A549 (cell line): ENCODE measurements at regions of chr14 and their contacts with region 1.

Region 1: DNA sequence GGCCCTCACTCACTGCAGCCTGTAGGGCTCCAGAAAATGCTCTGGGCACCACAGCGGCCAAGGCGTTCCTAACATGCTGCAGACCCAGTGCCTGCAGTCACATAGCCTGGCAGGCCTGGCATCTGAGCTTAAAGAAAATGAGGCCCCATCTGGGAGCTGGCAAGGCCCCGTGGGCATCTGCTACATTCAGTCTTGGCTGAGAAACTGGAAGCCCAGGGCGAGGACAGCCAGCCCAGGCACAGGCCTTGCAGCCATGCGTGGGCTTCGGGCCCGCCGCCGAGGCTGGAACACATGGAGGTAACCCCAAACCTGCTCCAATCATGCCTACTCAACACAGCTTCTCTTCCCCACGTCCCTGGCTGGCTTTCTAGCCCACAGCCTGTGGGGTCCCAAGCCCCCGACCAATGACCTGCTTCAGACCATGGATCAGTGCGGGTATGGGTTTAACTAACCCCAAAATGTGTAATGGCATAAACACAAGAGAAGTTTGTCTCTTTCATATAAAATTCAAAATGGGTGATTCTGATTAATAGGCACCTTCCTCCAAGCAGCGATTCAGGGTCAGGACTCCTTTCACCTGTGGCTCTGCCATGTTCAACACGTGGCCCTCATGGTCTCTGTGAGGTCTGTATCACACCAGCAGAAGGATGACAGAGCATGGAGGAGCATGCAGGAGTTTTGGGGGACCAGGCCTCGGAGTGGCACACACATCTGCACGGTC is 6.4 kb downstream of the NGB start:
- DNase-seq: no peak
- ATAC-seq: no peak
- H3K4me3 ChIP-seq: no peak overlapping the region
- H3K27ac ChIP-seq: no peak overlapping the region
- H3K4me1 ChIP-seq: no peaks in the 10 kb centered on the region
- CTCF ChIP-seq: no peak
- EP300 ChIP-seq: no peak
- POLR2A ChIP-seq: no peak
- RAD21 ChIP-seq: no peak

Region 2: GRCh38 chr14:77275601-77276017 is 11.0 kb after region 1 on chr14:
- CTCF ChIA-PET with region 1: interaction called, 13 read pairs
- POLR2A ChIA-PET with region 1: no interaction called
- DNase-seq: no peak
- ATAC-seq: no peak
- H3K4me3 ChIP-seq: no peak overlapping the region
- H3K27ac ChIP-seq: no peak overlapping the region
- H3K4me1 ChIP-seq: 0 out of 3 replicates have a peak, but pooled peaks cover 2% of the 10 kb centered on the region
- CTCF ChIP-seq: no peak
- EP300 ChIP-seq: no peak
- POLR2A ChIP-seq: no peak
- RAD21 ChIP-seq: no peak